ENCODE measurements at regions of chrX and their contacts with region 1.

Region 1: GRCh38 chrX:153708415-153708814 is 15.8 kb downstream of the BCAP31 start:
- DNase-seq: peak; percentile 73 to 89
- ATAC-seq: peak; percentile 66 to 72 (median 68)
- H3K4me3 ChIP-seq: peak overlapping the region; percentile 62
- H3K27ac ChIP-seq: peak overlapping the region; percentile 90
- H3K4me1 ChIP-seq: peaks cover 13% of the 10 kb centered on the region
- H3K27me3 ChIP-seq: no peaks in the 10 kb centered on the region
- CTCF ChIP-seq: peak; percentile 65

Region 2: GRCh38 chrX:153687121-153688039 is 21.0 kb before region 1 on chrX and contains the start of gene SLC6A8:
- intact Hi-C with region 1: loop called in 1 of 2 experiments (anchors 2 kb)
- DNase-seq: peak; percentile 76 to 88
- ATAC-seq: peak; percentile 61 to 68 (median 62)
- H3K4me3 ChIP-seq: peak within 1 kb of the TSS; percentile 68
- H3K27ac ChIP-seq: peak within 1 kb of the TSS; percentile 85
- H3K4me1 ChIP-seq: no peaks in the 10 kb centered on the region
- H3K27me3 ChIP-seq: peaks cover 0 to 7% (median 0%) of the 10 kb centered on the region in 3 donors
- CTCF ChIP-seq: peak; percentile 44
- total RNA-seq, gene SLC6A8: 82.2 to 256 (median 117) TPM